ENCODE measurements at regions of chr20 and their contacts with region 1.

Region 1: GRCh38 chr20:39716796-39717341 is 754.7 kb downstream of the DHX35 start:
- DNase-seq: no peak
- H3K4me3 ChIP-seq: no peak overlapping the region
- H3K27ac ChIP-seq: no peak overlapping the region
- H3K4me1 ChIP-seq: no peaks in the 10 kb centered on the region
- H3K27me3 ChIP-seq: no peaks in the 10 kb centered on the region
- CTCF ChIP-seq: no peak
- POLR2A ChIP-seq: no peak

Region 2: DNA sequence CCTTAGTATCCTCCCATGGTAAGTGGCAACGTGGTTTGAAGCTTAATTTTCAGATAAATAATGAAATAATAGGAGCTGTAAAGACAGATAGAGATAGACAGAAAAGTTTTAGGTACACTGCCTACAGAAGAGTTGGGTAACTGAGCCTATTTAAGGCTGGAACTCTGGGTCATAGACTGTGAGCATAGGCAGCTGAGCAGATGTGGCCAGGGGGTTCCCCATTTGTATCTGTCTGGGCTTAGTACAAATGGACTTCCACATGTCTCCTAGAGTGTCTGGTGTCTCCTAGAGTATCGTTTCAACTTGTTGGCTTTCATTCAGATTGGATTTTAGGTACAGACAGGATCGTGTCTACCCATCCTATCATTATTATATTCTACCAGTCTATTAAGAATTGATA is 105.0 kb before region 1 on chr20:
- CTCF ChIA-PET with region 1: no interaction called
- POLR2A ChIA-PET with region 1: no interaction called
- dilution Hi-C with region 1: no loop called
- intact Hi-C with region 1: no loop called
- DNase-seq: no peak
- H3K4me3 ChIP-seq: no peak overlapping the region
- H3K27ac ChIP-seq: no peak overlapping the region
- H3K4me1 ChIP-seq: no peaks in the 10 kb centered on the region
- H3K27me3 ChIP-seq: no peaks in the 10 kb centered on the region
- CTCF ChIP-seq: no peak
- POLR2A ChIP-seq: no peak

Region 3: GRCh38 chr20:39676857-39677391 is 39.9 kb before region 1 on chr20:
- CTCF ChIA-PET with region 1: no interaction called
- POLR2A ChIA-PET with region 1: no interaction called
- dilution Hi-C with region 1: no loop called
- intact Hi-C with region 1: no loop called
- DNase-seq: peak; percentile 47
- H3K4me3 ChIP-seq: no peak overlapping the region
- H3K27ac ChIP-seq: no peak overlapping the region
- H3K4me1 ChIP-seq: no peaks in the 10 kb centered on the region
- H3K27me3 ChIP-seq: peaks cover 0 to 2% of the 10 kb centered on the region in 2 experiments
- CTCF ChIP-seq: peak in 1 of 2 donors; percentile 43
- POLR2A ChIP-seq: no peak

Region 4: DNA sequence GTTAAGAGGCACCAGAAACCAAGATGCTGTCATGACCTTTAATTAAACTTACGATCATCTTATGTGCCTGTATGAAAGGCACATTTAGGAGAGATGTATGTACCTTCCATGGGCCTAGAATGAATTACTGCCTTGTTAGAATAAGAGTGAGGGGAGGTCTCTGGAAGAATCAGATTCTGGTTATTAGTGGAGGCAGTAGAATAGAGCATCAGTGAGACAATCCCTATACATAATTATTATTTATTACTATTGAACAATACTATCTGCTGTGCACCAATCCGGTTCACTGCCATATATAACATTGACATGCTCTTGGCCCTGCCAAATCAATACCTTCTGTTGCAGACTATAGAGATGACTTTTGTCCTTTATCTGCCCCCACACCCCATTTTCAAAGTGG is 21.8 kb after region 1 on chr20:
- CTCF ChIA-PET with region 1: no interaction called
- POLR2A ChIA-PET with region 1: no interaction called
- dilution Hi-C with region 1: no loop called
- intact Hi-C with region 1: loop called (anchors 1 kb)
- DNase-seq: no peak
- H3K4me3 ChIP-seq: no peak overlapping the region
- H3K27ac ChIP-seq: no peak overlapping the region
- H3K4me1 ChIP-seq: no peaks in the 10 kb centered on the region
- H3K27me3 ChIP-seq: no peaks in the 10 kb centered on the region
- CTCF ChIP-seq: no peak
- POLR2A ChIP-seq: no peak

Measured in endothelial cell of umbilical vein (primary cell).